Calu3 (cell line): ENCODE measurements at regions of chr1 and their contacts with region 1.

Region 1: DNA sequence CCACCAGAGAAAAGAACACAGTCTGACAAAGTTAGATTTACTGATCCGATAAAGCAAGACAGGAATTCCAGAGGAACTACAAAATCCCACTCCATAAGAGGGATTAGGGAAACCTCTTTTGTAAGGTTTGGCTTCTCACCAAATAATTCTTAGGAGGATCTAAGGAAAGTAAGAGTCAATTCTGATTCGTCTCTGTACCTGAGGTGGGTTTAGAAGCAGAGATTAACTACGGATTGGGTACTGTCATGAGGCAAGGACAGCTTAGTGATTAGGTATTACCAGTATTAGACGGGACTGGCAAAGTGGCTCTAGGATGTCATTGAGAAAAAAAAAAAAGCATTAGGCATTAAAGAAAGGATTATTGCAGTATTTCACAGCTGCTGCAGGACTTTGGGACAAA is 371.7 kb upstream of the BRINP3 start:
- DNase-seq: no peak
- H3K4me3 Mint-ChIP-seq: peak overlapping the region; percentile 50
- H3K27ac Mint-ChIP-seq: no peak overlapping the region
- H3K4me1 Mint-ChIP-seq: peaks cover 23% of the 10 kb centered on the region
- H3K27me3 Mint-ChIP-seq: no peaks in the 10 kb centered on the region
- CTCF ChIP-seq: no peak

Region 2: GRCh38 chr1:191629836-191630235 is 780.5 kb after region 1 on chr1:
- CTCF ChIA-PET with region 1: no interaction called
- intact Hi-C with region 1: loop called (anchors 10 kb)
- DNase-seq: peak; percentile 11
- H3K4me3 Mint-ChIP-seq: no peak overlapping the region
- H3K27ac Mint-ChIP-seq: peak overlapping the region; percentile 32
- H3K4me1 Mint-ChIP-seq: peaks cover 21% of the 10 kb centered on the region
- H3K27me3 Mint-ChIP-seq: no peaks in the 10 kb centered on the region
- CTCF ChIP-seq: no peak